ENCODE measurements at regions of chr3 and their contacts with region 1.

Region 1: GRCh38 chr3:99909714-99910494 is 92.2 kb downstream of the CMSS1 start:
- DNase-seq: peak; percentile 46 to 100
- H3K4me3 ChIP-seq: peak overlapping the region; percentile 26; the same call in 1 of the 2 replicates
- H3K27ac ChIP-seq: peak overlapping the region; percentile 91
- H3K4me1 ChIP-seq: peaks cover 52% of the 10 kb centered on the region
- H3K27me3 ChIP-seq: no peaks in the 10 kb centered on the region
- CTCF ChIP-seq: no peak

Region 2: GRCh38 chr3:99714146-99714545 is 195.8 kb before region 1 on chr3:
- CTCF ChIA-PET with region 1: no interaction called
- POLR2A ChIA-PET with region 1: no interaction called
- intact Hi-C with region 1: no loop called
- DNase-seq: no peak
- H3K4me3 ChIP-seq: no peak overlapping the region
- H3K27ac ChIP-seq: no peak overlapping the region
- H3K4me1 ChIP-seq: no peaks in the 10 kb centered on the region
- H3K27me3 ChIP-seq: no peaks in the 10 kb centered on the region
- CTCF ChIP-seq: no peak

Region 3: GRCh38 chr3:99875929-99876841 is 33.7 kb before region 1 on chr3:
- CTCF ChIA-PET with region 1: no interaction called
- POLR2A ChIA-PET with region 1: no interaction called
- intact Hi-C with region 1: loop called (anchors 2 kb)
- DNase-seq: peak; percentile 76 to 86
- H3K4me3 ChIP-seq: peak overlapping the region; percentile 65
- H3K27ac ChIP-seq: peak overlapping the region; percentile 60
- H3K4me1 ChIP-seq: peaks cover 65% of the 10 kb centered on the region
- H3K27me3 ChIP-seq: no peaks in the 10 kb centered on the region
- CTCF ChIP-seq: no peak

Region 4: DNA sequence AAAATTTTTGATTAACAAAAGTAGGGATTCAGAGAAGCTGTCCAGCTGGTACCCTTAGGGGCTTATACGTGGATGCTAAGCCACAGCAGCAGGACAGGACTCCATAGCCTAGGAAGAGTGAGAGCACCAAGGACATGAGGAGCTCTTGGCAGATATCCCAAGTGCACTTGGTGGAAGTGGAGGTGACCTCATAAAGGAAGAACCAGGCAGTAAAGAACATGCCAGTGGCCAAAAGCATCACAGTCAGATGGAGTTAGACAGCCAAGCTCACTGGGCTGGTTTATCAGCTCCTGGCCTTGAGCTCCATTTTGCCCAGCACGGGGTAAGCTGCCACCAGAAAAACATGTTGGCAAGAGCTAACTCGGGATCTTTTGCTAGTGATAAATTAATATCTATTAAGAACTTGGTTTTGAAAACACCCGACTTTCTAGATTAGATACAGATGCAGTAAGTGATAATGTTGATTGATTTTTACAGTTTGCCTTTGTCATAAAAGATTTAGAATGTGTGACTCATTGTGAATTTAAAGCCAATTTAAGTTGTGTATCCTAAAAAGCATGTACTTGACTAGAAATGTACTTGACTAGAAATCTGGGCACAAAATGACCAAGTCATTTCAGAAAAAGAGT is 15.8 kb after region 1 on chr3:
- CTCF ChIA-PET with region 1: interaction called, 3 read pairs
- POLR2A ChIA-PET with region 1: no interaction called
- intact Hi-C with region 1: loop called (anchors 1 kb)
- DNase-seq: peak; percentile 68 to 88
- H3K4me3 ChIP-seq: no peak overlapping the region
- H3K27ac ChIP-seq: peak overlapping the region; percentile 46
- H3K4me1 ChIP-seq: peaks cover 21% of the 10 kb centered on the region
- H3K27me3 ChIP-seq: no peaks in the 10 kb centered on the region
- CTCF ChIP-seq: no peak

Region 5: GRCh38 chr3:100032243-100032642 is 122.3 kb after region 1 on chr3:
- CTCF ChIA-PET with region 1: no interaction called
- POLR2A ChIA-PET with region 1: no interaction called
- intact Hi-C with region 1: no loop called
- DNase-seq: no peak
- H3K4me3 ChIP-seq: no peak overlapping the region
- H3K27ac ChIP-seq: no peak overlapping the region
- H3K4me1 ChIP-seq: 0 out of 2 replicates have a peak, but pooled peaks cover 16% of the 10 kb centered on the region
- H3K27me3 ChIP-seq: no peaks in the 10 kb centered on the region
- CTCF ChIP-seq: no peak